ENCODE measurements at regions of chr2 and their contacts with region 1.

Region 1: DNA sequence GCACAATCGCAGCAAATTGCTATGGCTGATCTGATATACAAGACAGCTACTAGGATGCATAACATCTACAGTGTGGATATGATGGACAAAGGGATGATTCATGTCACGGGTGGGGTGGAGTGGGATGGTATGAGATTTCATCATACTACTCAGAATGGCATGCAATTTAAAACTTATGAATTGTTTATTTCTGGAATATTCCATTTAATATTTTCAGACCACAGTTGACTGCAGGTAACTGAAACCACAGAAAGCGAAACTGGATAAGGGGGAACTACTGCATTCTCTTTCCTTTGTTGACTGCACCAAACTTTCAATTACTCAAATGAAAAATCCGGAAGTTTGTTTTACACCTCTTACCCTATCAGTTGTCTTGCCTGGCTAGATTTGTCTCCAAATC is 94.4 kb upstream of the NEUROD1 start:
- ATAC-seq: peak in 2 of 8 experiments; percentile 91 to 96
- H3K4me3 ChIP-seq: no peak overlapping the region
- H3K27ac ChIP-seq: no peak overlapping the region
- H3K4me1 ChIP-seq: peaks cover 6 to 11% of the 10 kb centered on the region in 2 donors

Region 2: DNA sequence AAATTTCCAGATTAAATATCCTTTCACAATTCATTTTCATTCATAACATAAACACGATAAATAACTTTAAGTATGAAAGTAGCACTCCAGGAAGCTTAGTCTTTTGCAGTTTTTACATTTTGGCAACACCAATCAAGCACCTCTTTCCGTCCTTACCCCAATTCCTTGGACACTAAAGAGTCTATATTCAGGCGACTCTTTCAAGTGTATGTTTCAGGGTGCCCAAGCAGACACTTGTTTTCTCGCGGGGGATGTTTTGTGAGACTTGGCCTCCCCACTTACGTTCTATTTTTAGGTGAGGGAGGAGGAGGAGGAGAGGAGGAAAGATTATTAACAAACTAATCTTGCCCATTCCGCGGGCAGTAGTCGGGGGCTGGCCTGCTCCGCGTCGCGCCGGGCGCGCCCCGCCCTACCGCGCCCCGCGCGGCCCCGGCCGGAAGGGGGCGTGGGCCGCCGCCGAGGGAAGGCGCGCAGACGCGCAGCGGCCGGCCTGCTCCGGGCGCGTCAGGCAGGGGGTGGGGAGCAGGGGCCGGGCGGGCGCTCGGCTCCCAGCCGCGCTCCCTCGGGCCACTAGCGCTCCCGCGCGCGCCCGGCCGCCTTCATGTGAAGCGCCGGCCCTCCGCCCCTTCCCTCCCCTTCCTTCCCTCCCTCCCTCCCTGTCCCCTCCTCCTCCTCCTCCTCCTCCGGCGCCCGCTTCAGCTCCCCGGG is 116.7 kb after region 1 on chr2 and contains the start of gene ITPRID2:
- in situ Hi-C with region 1: loop called in 1 of 9 experiments (anchors 25 kb)
- ATAC-seq: peak; percentile 87 to 93 (median 91)
- H3K4me3 ChIP-seq: peak within 1 kb of the TSS; percentile 67 to 88 (median 78)
- H3K27ac ChIP-seq: peak within 1 kb of the TSS; percentile 77 to 86
- H3K4me1 ChIP-seq: peaks cover 0 to 13% of the 10 kb centered on the region in 2 donors
- total RNA-seq, gene ITPRID2: 27.2 to 113 (median 35.9) TPM